ENCODE measurements at regions of chr5 and their contacts with region 1.

Region 1: GRCh38 chr5:88268385-88269184 is at the start of gene TMEM161B:
- DNase-seq: peak; percentile 90
- H3K4me3 Mint-ChIP-seq: peak within 1 kb of the TSS; percentile 99
- H3K27ac Mint-ChIP-seq: peak within 1 kb of the TSS; percentile 97
- H3K4me1 Mint-ChIP-seq: peaks cover 45% of the 10 kb centered on the region
- H3K27me3 Mint-ChIP-seq: no peaks in the 10 kb centered on the region
- total RNA-seq, gene TMEM161B: 31.1 and 32.7 TPM in 2 replicates

Region 2: DNA sequence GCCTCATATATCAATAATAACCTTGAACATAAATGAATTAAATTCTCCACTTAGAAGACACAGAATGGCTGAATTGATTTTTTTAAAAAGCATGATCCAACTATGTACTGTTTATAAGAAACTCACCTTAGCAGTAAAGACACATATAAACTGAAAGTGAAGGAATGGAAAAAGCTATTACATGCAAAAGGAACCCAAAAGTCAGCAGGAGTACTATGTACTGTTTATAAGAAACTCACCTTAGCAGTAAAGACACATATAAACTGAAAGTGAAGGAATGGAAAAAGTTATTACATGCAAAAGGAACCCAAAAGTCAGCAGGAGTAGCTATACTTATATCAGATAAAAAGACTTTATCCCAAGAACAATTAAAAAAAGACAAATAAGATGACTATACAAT is 204.8 kb before region 1 on chr5:
- intact Hi-C with region 1: no loop called
- DNase-seq: no peak
- H3K4me3 Mint-ChIP-seq: no peak overlapping the region
- H3K27ac Mint-ChIP-seq: no peak overlapping the region
- H3K4me1 Mint-ChIP-seq: no peaks in the 10 kb centered on the region
- H3K27me3 Mint-ChIP-seq: no peaks in the 10 kb centered on the region

Region 3: GRCh38 chr5:88660947-88661805 is 392.6 kb after region 1 on chr5:
- intact Hi-C with region 1: loop called (anchors 10 kb)
- DNase-seq: peak; percentile 43
- H3K4me3 Mint-ChIP-seq: peak overlapping the region; percentile 70
- H3K27ac Mint-ChIP-seq: no peak overlapping the region
- H3K4me1 Mint-ChIP-seq: peaks cover 21% of the 10 kb centered on the region
- H3K27me3 Mint-ChIP-seq: peaks cover 60% of the 10 kb centered on the region